ENCODE measurements at regions of chr20 and their contacts with region 1.

Region 1: DNA sequence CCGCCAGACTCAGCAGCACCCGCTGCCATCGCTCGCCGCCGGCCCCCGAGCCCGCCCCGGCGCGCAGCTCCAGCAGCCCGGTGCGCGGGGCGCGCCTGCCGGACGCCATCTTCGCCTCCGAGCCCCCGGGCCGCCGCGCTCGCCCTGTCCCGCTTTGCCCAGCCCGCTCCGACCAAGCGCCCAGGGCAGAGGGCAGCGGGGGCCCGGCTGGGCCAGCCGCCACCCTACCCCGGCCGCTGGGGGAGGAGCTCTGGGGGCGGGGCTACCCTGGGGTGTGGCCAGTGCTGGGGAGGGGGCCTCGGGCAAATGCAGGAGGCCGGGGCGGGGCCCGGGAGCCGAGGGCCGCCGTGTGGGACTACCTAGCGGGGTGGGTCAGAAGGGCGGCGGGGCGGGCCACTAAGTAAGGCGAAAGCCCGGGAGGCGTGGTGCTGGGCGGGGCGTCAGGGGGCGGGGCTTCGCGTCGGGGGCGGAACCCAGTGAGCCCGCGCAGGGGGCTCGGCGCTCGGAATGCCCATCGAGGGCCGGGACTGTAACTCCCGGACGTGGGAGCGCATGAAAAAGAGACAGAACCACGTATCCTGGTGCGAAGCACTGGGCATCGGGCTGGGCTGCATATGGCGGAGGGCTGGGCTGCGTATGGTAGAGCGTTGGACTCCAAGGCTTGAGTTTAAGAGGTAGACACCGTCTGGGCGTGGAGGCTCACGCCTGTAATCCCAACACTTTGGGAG is at the start of gene SNTA1:
- DNase-seq: peak; percentile 83
- H3K4me3 Mint-ChIP-seq: peak within 1 kb of the TSS; percentile 88
- H3K27ac Mint-ChIP-seq: peak within 1 kb of the TSS; percentile 78
- H3K4me1 Mint-ChIP-seq: peaks cover 14% of the 10 kb centered on the region
- H3K27me3 Mint-ChIP-seq: peaks cover 13% of the 10 kb centered on the region
- total RNA-seq, gene SNTA1: 1.1 and 1.6 TPM in 2 replicates

Region 2: GRCh38 chr20:33401184-33401920 is 42.3 kb before region 1 on chr20 and contains the start of gene CDK5RAP1:
- intact Hi-C with region 1: loop called (anchors 1 kb)
- DNase-seq: peak; percentile 82
- H3K4me3 Mint-ChIP-seq: peak within 1 kb of the TSS; percentile 98
- H3K27ac Mint-ChIP-seq: peak within 1 kb of the TSS; percentile 96
- H3K4me1 Mint-ChIP-seq: peaks cover 30% of the 10 kb centered on the region
- H3K27me3 Mint-ChIP-seq: no peaks in the 10 kb centered on the region
- total RNA-seq, gene CDK5RAP1: 40.3 and 40.7 TPM in 2 replicates

Region 3: GRCh38 chr20:33415948-33416347 is 27.7 kb before region 1 on chr20:
- intact Hi-C with region 1: no loop called
- DNase-seq: no peak
- H3K4me3 Mint-ChIP-seq: no peak overlapping the region
- H3K27ac Mint-ChIP-seq: no peak overlapping the region
- H3K4me1 Mint-ChIP-seq: no peaks in the 10 kb centered on the region
- H3K27me3 Mint-ChIP-seq: no peaks in the 10 kb centered on the region

Region 4: DNA sequence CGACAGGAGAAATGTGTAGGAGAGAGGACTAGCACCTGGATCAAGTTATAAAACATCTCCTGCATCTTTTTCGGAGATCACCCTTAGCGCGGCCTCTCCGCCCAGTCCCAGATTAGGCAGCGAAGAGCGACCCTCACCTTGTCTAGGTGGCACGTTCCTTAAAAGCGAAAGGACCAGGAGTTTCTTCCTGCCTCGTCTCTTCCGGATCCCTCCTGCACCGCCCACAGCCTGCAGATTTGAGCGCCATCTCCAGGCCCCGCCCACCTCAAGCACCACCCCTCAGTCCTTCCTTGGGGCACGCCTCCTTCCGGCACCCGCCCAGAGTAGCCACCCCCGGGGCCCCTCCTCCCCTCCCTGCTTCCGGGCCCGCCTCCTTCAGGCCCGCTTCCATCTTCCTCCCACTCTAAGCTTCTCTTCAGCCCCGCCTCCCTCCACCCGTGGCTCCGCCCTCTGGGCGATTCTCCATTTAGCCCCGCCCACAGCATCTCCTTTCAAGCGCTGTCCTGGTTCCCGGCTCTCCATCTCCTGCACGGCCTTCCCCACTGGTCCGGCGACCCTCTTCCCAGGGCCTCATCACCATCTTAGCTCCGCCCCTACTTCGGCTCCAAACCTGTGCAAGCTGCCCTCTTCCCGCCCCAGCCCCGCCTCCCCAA is 549.4 kb after region 1 on chr20:
- intact Hi-C with region 1: loop called (anchors 10 kb)
- DNase-seq: peak; percentile 99
- H3K4me3 Mint-ChIP-seq: peak overlapping the region; percentile 91
- H3K27ac Mint-ChIP-seq: peak overlapping the region; percentile 84
- H3K4me1 Mint-ChIP-seq: peaks cover 40% of the 10 kb centered on the region
- H3K27me3 Mint-ChIP-seq: no peaks in the 10 kb centered on the region

Measured in activated T-helper 2 cell treated with anti-CD3 and anti-CD28 coated beads, Interferon-gamma antibody, Interleukin-2, Interleukin-4, amounts not matched to agents 10 μg/mL and 5 μg/mL and 100 μg/mL, durations not matched to agents 14 hours and 24 hours and 36 hours (primary cell).